Gastrocnemius medialis (tissue), 4 donors: ENCODE measurements at regions of chr17 and their contacts with region 1.

Region 1: GRCh38 chr17:37392024-37392590 is 14.5 kb downstream of the ACACA start:
- DNase-seq: no peak
- ATAC-seq: peak; percentile 62 to 65
- H3K4me3 ChIP-seq: no peak overlapping the region
- H3K27ac ChIP-seq: peak overlapping the region in 1 of 4 donors; percentile 55
- H3K4me1 ChIP-seq: peaks cover 0 to 4% of the 10 kb centered on the region in 2 donors
- H3K27me3 ChIP-seq: no peaks in the 10 kb centered on the region
- CTCF ChIP-seq: no peak
- POLR2A ChIP-seq: no peak

Region 2: DNA sequence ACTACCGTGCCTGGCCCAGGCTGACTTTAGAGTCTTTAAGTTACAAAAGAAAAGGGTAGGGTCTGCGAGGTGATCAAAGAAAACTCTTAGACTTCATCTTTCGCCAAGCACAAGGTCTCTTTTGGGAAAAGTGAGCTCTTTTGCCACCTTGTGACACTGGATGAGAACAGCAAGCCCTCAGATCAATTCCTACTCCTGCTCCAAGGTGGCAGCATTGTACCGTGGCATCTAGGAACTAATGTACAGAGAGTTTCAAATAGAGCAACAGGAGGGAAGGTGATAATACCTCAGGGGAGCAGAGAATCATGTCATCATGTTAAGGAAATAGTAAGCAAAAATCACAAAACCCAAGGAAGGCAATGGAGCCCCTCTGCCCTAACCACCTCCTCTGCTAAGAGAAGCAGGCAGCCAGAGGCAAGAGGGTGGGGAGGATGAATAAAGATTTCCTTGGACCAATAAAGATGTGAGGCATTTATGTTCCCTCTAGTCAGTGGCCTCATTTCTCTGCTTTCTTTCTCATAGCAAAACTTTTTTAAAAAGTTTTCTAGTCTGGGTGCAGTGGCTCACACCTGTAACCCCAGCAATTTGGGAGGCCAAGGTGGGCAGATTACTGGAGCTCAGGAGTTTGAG is 18.5 kb before region 1 on chr17:
- in situ Hi-C with region 1: no loop called
- intact Hi-C with region 1: loop called (anchors 1 kb)
- DNase-seq: peak; percentile 36 to 57
- ATAC-seq: peak; percentile 95 to 97
- H3K4me3 ChIP-seq: no peak overlapping the region
- H3K27ac ChIP-seq: no peak overlapping the region
- H3K4me1 ChIP-seq: no peaks in the 10 kb centered on the region
- H3K27me3 ChIP-seq: no peaks in the 10 kb centered on the region
- CTCF ChIP-seq: peak; percentile 77 to 96 (median 88)
- POLR2A ChIP-seq: no peak